ENCODE measurements at regions of chr5 and their contacts with region 1.

Region 1: GRCh38 chr5:59449905-59450644 is 443.5 kb downstream of the PDE4D start:
- DNase-seq: no peak
- H3K4me3 ChIP-seq: no peak overlapping the region
- H3K27ac ChIP-seq: no peak overlapping the region
- H3K4me1 ChIP-seq: no peaks in the 10 kb centered on the region
- H3K27me3 ChIP-seq: no peaks in the 10 kb centered on the region
- CTCF ChIP-seq: no peak
- EP300 ChIP-seq: no peak
- POLR2A ChIP-seq: no peak

Region 2: GRCh38 chr5:58094031-58094430 is 1356.0 kb before region 1 on chr5:
- intact Hi-C with region 1: loop called in 1 of 4 experiments (anchors 5 kb)
- DNase-seq: no peak
- H3K4me3 ChIP-seq: no peak overlapping the region
- H3K27ac ChIP-seq: no peak overlapping the region
- H3K4me1 ChIP-seq: peaks cover under 1% of the 10 kb centered on the region
- H3K27me3 ChIP-seq: no peaks in the 10 kb centered on the region
- CTCF ChIP-seq: no peak
- EP300 ChIP-seq: no peak
- POLR2A ChIP-seq: no peak

Region 3: GRCh38 chr5:58891096-58891970 is 558.7 kb before region 1 on chr5:
- intact Hi-C with region 1: no loop called
- DNase-seq: peak; percentile 74 to 89 (median 80)
- H3K4me3 ChIP-seq: no peak overlapping the region
- H3K27ac ChIP-seq: peak overlapping the region; percentile 74 to 82
- H3K4me1 ChIP-seq: peaks cover 3% of the 10 kb centered on the region
- H3K27me3 ChIP-seq: no peaks in the 10 kb centered on the region
- CTCF ChIP-seq: peak in 2 of 3 donors; percentile 65 to 68
- EP300 ChIP-seq: no peak
- POLR2A ChIP-seq: no peak

Measured in ovary (tissue), 10 donors.